CD8-positive, alpha-beta T cell (primary cell): ENCODE measurements at regions of chr11 and their contacts with region 1.

Region 1: GRCh38 chr11:73335204-73335923 is 27.3 kb downstream of the ARHGEF17 start:
- DNase-seq: peak; percentile 61 to 86 (median 79)
- ATAC-seq: peak; percentile 95
- H3K4me3 ChIP-seq: no peak overlapping the region
- H3K4me3 Mint-ChIP-seq: no peak overlapping the region
- H3K27ac ChIP-seq: no peak overlapping the region
- H3K27ac Mint-ChIP-seq: no peak overlapping the region
- H3K4me1 ChIP-seq: no peaks in the 10 kb centered on the region
- H3K4me1 Mint-ChIP-seq: no peaks in the 10 kb centered on the region
- H3K27me3 ChIP-seq: no peaks in the 10 kb centered on the region
- H3K27me3 Mint-ChIP-seq: peaks cover 5% of the 10 kb centered on the region
- CTCF ChIP-seq: peak; percentile 97

Region 2: GRCh38 chr11:73184953-73185671 is 150.3 kb before region 1 on chr11:
- CTCF ChIA-PET with region 1: interaction called, 19 read pairs
- POLR2A ChIA-PET with region 1: no interaction called
- intact Hi-C with region 1: loop called (anchors 1 kb)
- DNase-seq: peak in 8 of 9 experiments; percentile 10 to 59 (median 46)
- ATAC-seq: peak; percentile 74
- H3K4me3 ChIP-seq: no peak overlapping the region
- H3K4me3 Mint-ChIP-seq: no peak overlapping the region
- H3K27ac ChIP-seq: no peak overlapping the region
- H3K27ac Mint-ChIP-seq: no peak overlapping the region
- H3K4me1 ChIP-seq: peaks cover 5% of the 10 kb centered on the region
- H3K4me1 Mint-ChIP-seq: peaks cover 8% of the 10 kb centered on the region
- H3K27me3 ChIP-seq: peaks cover 0 to 5% of the 10 kb centered on the region in 2 experiments
- H3K27me3 Mint-ChIP-seq: peaks cover 15% of the 10 kb centered on the region
- CTCF ChIP-seq: peak; percentile 68

Region 3: DNA sequence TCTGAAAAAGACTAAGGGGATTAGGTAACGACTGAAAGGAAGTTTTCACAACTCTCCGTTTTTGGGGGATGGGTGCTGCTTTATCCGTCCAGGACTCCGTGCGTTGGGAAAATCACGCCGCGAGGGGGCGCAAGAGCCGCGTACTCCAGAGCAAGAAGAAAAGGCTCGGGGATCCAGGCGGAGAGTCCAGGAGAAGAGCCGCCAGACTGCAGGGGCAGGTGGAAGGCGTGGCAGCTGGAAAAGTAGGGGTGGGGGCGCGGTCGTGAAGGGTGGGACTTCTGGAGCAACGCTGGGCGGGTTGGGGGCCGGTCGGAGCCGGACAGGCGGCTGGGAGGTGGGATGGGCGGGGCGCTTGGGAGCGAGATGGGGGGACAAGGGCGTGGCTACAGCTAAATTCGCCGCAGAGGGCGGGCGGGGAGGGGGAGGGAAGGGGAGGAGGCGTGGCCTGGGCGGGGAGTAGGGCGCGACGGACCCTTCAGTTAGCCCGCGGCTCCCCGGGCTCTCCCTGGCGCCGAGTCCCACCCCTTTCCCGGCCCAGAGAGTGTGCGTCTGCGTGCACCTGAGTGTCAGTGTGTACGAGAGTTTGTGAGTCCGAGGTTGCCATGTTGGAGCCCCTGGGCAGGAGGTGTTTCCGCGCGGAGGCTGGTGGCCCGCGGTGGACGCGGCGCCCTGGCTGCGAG is 27.9 kb before region 1 on chr11:
- CTCF ChIA-PET with region 1: interaction called, 113 read pairs
- POLR2A ChIA-PET with region 1: interaction called, 5 read pairs
- intact Hi-C with region 1: loop called (anchors 1 kb)
- DNase-seq: peak; percentile 77 to 94 (median 89)
- ATAC-seq: peak; percentile 71
- H3K4me3 ChIP-seq: peak overlapping the region; percentile 62 to 77
- H3K4me3 Mint-ChIP-seq: peak overlapping the region; percentile 86
- H3K27ac ChIP-seq: no peak overlapping the region
- H3K27ac Mint-ChIP-seq: no peak overlapping the region
- H3K4me1 ChIP-seq: peaks cover 9% of the 10 kb centered on the region
- H3K4me1 Mint-ChIP-seq: peaks cover 10% of the 10 kb centered on the region
- H3K27me3 ChIP-seq: peaks cover 11 to 12% of the 10 kb centered on the region in 2 experiments
- H3K27me3 Mint-ChIP-seq: peaks cover 15% of the 10 kb centered on the region
- CTCF ChIP-seq: peak; percentile 46

Region 4: DNA sequence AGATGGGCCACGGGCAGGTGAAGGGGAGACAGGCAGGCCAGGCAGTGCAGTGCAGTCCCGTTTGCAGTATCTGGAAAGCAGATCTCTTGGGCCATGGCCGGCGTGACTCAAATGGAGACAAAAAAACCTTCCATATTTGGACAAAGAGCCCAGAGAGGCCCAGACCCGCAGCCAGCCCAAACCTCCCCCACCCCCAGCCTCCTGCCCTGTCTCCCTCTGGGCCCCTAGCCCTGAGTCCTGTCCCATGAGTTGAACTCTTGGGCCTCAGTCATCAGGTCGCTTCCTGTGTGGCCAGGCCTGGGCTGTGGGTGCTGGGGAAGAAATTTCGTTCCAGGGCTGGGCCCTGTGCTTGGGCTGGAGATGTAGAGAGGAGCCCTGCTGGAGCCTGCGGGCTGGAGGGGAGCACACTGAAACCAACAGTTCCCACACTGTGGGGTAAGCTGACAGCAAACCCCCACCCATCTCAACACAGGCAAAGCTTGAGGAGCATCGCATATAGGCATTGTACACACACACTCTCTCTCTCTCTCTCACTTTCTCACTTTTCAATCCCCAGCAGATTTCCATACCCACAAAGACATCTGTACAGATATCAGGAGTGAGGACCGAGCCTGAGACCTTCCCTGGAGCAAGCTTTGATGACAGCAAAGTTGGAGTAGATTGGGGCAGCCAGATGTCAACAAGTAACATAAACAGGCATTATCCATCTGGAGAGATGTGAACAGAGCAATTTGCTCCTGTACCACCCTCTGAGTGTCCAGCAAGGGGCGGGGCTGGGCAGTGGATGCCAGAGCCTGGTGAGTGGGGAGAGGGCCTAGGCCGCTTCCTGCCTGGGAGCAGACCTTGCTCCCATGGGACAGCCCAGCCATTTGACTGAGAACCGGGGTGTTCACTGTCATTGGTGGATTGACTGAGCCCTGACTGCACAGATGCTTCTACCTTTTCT is 10.1 kb before region 1 on chr11:
- CTCF ChIA-PET with region 1: interaction called, 20 read pairs
- POLR2A ChIA-PET with region 1: no interaction called
- intact Hi-C with region 1: no loop called
- DNase-seq: no peak
- ATAC-seq: no peak
- H3K4me3 ChIP-seq: no peak overlapping the region
- H3K4me3 Mint-ChIP-seq: no peak overlapping the region
- H3K27ac ChIP-seq: no peak overlapping the region
- H3K27ac Mint-ChIP-seq: no peak overlapping the region
- H3K4me1 ChIP-seq: peaks cover 11% of the 10 kb centered on the region
- H3K4me1 Mint-ChIP-seq: peaks cover 6% of the 10 kb centered on the region
- H3K27me3 ChIP-seq: no peaks in the 10 kb centered on the region
- H3K27me3 Mint-ChIP-seq: no peaks in the 10 kb centered on the region
- CTCF ChIP-seq: no peak

Region 5: GRCh38 chr11:73384872-73385689 is 49.7 kb after region 1 on chr11:
- CTCF ChIA-PET with region 1: interaction called, 19 read pairs
- POLR2A ChIA-PET with region 1: no interaction called
- intact Hi-C with region 1: no loop called
- DNase-seq: peak in 4 of 9 experiments; percentile 23 to 53 (median 42)
- ATAC-seq: peak; percentile 39
- H3K4me3 ChIP-seq: no peak overlapping the region
- H3K4me3 Mint-ChIP-seq: peak overlapping the region; percentile 37
- H3K27ac ChIP-seq: no peak overlapping the region
- H3K27ac Mint-ChIP-seq: peak overlapping the region; percentile 66
- H3K4me1 ChIP-seq: peaks cover 43% of the 10 kb centered on the region
- H3K4me1 Mint-ChIP-seq: peaks cover 62% of the 10 kb centered on the region
- H3K27me3 ChIP-seq: no peaks in the 10 kb centered on the region
- H3K27me3 Mint-ChIP-seq: no peaks in the 10 kb centered on the region
- CTCF ChIP-seq: no peak